A549 (cell line): ENCODE measurements at regions of chr19 and their contacts with region 1.

Region 1: DNA sequence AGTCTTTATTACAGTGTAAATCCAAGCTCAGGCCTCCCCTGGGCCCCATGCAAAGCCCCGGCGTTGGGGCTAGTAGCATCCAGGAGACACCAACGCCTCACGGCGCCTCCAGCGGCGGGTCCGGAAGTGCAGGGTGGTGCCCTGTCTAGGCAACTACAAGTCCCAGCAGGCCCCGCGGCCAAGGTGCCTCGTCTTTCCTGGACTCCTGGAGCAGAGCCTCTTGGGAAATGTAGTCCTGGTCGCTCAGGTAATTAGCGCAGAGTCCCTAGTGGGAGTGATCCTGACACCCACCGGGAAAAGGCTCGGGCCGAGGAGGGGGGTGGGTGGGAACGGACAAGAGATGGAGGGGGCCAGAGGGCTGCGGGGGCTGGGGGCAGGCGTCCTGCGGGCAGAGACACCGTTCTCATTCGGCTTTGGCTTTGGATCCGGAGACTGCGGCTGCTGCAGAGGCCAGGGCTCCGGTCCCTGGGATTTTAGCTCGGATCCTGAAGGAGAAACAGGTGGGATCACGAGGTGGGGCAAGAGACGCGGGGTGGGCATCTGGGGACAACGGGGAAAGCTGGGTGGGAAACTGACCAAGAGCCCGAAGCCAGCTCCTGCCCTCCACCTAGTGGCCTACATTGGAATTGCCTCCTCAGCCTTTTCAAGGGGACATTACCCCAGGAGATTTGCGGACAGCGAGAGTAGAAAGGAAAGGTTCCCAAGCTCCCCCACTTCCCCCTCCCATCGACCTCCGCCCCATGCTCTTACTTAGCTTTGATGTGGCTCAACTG is 11.4 kb downstream of the RTN2 start:
- DNase-seq: peak; percentile 94 to 97
- ATAC-seq: peak; percentile 92 to 97
- H3K4me3 ChIP-seq: peak overlapping the region; percentile 63
- H3K27ac ChIP-seq: peak overlapping the region; percentile 76 to 92
- H3K4me1 ChIP-seq: peaks cover 5% of the 10 kb centered on the region
- CTCF ChIP-seq: peak; percentile 63
- EP300 ChIP-seq: no peak
- POLR2A ChIP-seq: no peak
- RAD21 ChIP-seq: peak; percentile 65 to 71

Region 2: DNA sequence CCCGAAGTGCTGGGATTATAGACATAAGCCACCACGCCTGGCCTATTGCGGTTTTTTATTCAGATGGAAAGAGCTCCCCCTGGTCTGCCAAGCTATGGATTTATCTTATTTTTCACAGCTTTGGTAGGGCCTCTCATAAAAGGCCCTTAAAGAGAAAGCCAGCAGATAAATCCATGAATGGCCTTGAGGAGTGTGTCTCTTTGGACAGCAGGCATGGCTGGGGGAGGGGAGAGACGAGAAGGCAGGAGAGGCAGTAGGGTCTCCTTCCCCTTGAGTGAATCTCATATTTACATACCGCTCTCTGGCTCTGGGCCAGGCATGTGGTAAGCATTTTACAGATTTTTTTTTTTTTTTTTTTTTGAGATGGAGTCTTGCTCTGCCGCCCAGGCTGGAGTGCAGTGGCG is 209.2 kb before region 1 on chr19:
- CTCF ChIA-PET with region 1: no interaction called
- POLR2A ChIA-PET with region 1: no interaction called
- DNase-seq: no peak
- ATAC-seq: no peak
- H3K4me3 ChIP-seq: no peak overlapping the region
- H3K27ac ChIP-seq: no peak overlapping the region
- H3K4me1 ChIP-seq: no peaks in the 10 kb centered on the region
- CTCF ChIP-seq: no peak
- EP300 ChIP-seq: no peak
- POLR2A ChIP-seq: no peak
- RAD21 ChIP-seq: no peak

Region 3: GRCh38 chr19:45370410-45371204 is 114.9 kb before region 1 on chr19 and contains the start of gene ERCC2:
- CTCF ChIA-PET with region 1: no interaction called
- POLR2A ChIA-PET with region 1: no interaction called
- DNase-seq: peak; percentile 98 to 99
- ATAC-seq: peak; percentile 99 to 100
- H3K4me3 ChIP-seq: peak within 1 kb of the TSS; percentile 60
- H3K27ac ChIP-seq: peak within 1 kb of the TSS; percentile 71 to 93
- H3K4me1 ChIP-seq: no peaks in the 10 kb centered on the region; the same call in 2 of the 3 replicates
- CTCF ChIP-seq: no peak
- EP300 ChIP-seq: no peak
- POLR2A ChIP-seq: peak; percentile 3; the same call in 1 of the 2 replicates
- RAD21 ChIP-seq: no peak
- polyA plus RNA-seq, gene ERCC2: 12.9 and 15.0 TPM in 2 replicates

Region 4: GRCh38 chr19:45385392-45386221 is 99.9 kb before region 1 on chr19:
- CTCF ChIA-PET with region 1: no interaction called
- POLR2A ChIA-PET with region 1: no interaction called
- DNase-seq: no peak
- ATAC-seq: peak in 1 of 2 experiments; percentile 15; a peak in 3 of 6 replicates
- H3K4me3 ChIP-seq: no peak overlapping the region
- H3K27ac ChIP-seq: no peak overlapping the region
- H3K4me1 ChIP-seq: no peaks in the 10 kb centered on the region
- CTCF ChIP-seq: no peak
- EP300 ChIP-seq: no peak
- POLR2A ChIP-seq: no peak
- RAD21 ChIP-seq: no peak

Region 5: GRCh38 chr19:45439569-45440254 is 45.8 kb before region 1 on chr19:
- CTCF ChIA-PET with region 1: interaction called, 1,883 read pairs
- POLR2A ChIA-PET with region 1: interaction called, 9 read pairs
- DNase-seq: peak; percentile 74 to 83
- ATAC-seq: peak; percentile 26 to 55
- H3K4me3 ChIP-seq: peak overlapping the region; percentile 52
- H3K27ac ChIP-seq: peak overlapping the region; percentile 80 to 95
- H3K4me1 ChIP-seq: peaks cover 27% of the 10 kb centered on the region
- CTCF ChIP-seq: peak; percentile 100
- EP300 ChIP-seq: no peak
- POLR2A ChIP-seq: peak; percentile 12; the same call in 1 of the 2 replicates
- RAD21 ChIP-seq: peak; percentile 77 to 99

Region 6: GRCh38 chr19:45469132-45469944 is 16.2 kb before region 1 on chr19:
- CTCF ChIA-PET with region 1: interaction called, 169 read pairs
- POLR2A ChIA-PET with region 1: interaction called, 10 read pairs
- DNase-seq: peak; percentile 78 to 94
- ATAC-seq: peak; percentile 58 to 63
- H3K4me3 ChIP-seq: peak overlapping the region; percentile 58
- H3K27ac ChIP-seq: peak overlapping the region; percentile 55 to 86
- H3K4me1 ChIP-seq: peaks cover 24% of the 10 kb centered on the region
- CTCF ChIP-seq: no peak
- EP300 ChIP-seq: no peak
- POLR2A ChIP-seq: peak; percentile 28; the same call in 1 of the 2 replicates
- RAD21 ChIP-seq: no peak

Region 7: GRCh38 chr19:45506246-45506990 is 20.9 kb after region 1 on chr19:
- CTCF ChIA-PET with region 1: interaction called, 32 read pairs
- POLR2A ChIA-PET with region 1: no interaction called
- DNase-seq: peak; percentile 97 to 98
- ATAC-seq: peak; percentile 79 to 80
- H3K4me3 ChIP-seq: peak overlapping the region; percentile 70
- H3K27ac ChIP-seq: peak overlapping the region; percentile 99
- H3K4me1 ChIP-seq: peaks cover 28% of the 10 kb centered on the region
- CTCF ChIP-seq: peak; percentile 81
- EP300 ChIP-seq: peak; percentile 17 to 30; a peak in 1 of 5 replicates
- POLR2A ChIP-seq: peak; percentile 78
- RAD21 ChIP-seq: peak; percentile 48 to 59

Region 8: GRCh38 chr19:45547976-45548609 is 62.6 kb after region 1 on chr19:
- CTCF ChIA-PET with region 1: interaction called, 19 read pairs
- POLR2A ChIA-PET with region 1: no interaction called
- DNase-seq: peak; percentile 91 to 93
- ATAC-seq: peak; percentile 92 to 93
- H3K4me3 ChIP-seq: no peak overlapping the region
- H3K27ac ChIP-seq: peak overlapping the region; percentile 68 to 84
- H3K4me1 ChIP-seq: peaks cover 16% of the 10 kb centered on the region
- CTCF ChIP-seq: no peak
- EP300 ChIP-seq: no peak
- POLR2A ChIP-seq: no peak
- RAD21 ChIP-seq: no peak

Region 9: GRCh38 chr19:45598267-45599001 is 112.9 kb after region 1 on chr19:
- CTCF ChIA-PET with region 1: no interaction called
- POLR2A ChIA-PET with region 1: no interaction called
- DNase-seq: no peak
- ATAC-seq: peak; percentile 14 to 31; a peak in 4 of 6 replicates
- H3K4me3 ChIP-seq: peak overlapping the region; percentile 25; the same call in 2 of the 3 replicates
- H3K27ac ChIP-seq: peak overlapping the region; percentile 45 to 66; a peak in 3 of 6 replicates
- H3K4me1 ChIP-seq: peaks cover 23% of the 10 kb centered on the region
- CTCF ChIP-seq: no peak
- EP300 ChIP-seq: no peak
- POLR2A ChIP-seq: no peak
- RAD21 ChIP-seq: no peak